ENCODE measurements at regions of chr1 and their contacts with region 1.

Region 1: GRCh38 chr1:224149713-224150112 is 33.3 kb upstream of the DEGS1 start:
- DNase-seq: no peak
- ATAC-seq: no peak
- H3K4me3 ChIP-seq: no peak overlapping the region
- H3K27ac ChIP-seq: no peak overlapping the region
- H3K4me1 ChIP-seq: no peaks in the 10 kb centered on the region
- H3K27me3 ChIP-seq: no peaks in the 10 kb centered on the region
- CTCF ChIP-seq: no peak

Region 2: DNA sequence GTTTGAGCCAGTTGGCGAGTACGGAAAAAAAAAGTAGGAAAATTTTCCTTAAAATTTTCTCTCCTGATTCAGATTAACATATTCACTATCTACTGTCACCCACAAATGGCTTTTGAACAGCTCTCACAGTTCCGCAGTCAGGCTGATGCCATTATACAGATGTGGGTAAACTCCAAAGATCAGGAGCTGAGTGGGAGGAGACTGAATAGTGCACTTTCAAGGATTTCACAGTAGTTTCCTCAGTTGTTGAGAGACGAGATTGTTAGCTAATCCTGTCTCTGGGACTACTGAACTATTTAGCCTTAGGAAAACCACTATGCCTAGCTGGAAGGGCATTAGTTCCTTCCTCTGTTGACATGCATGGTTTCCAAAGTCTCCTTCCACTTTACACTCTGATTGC is 1338.0 kb before region 1 on chr1:
- CTCF ChIA-PET with region 1: interaction called, 16 read pairs
- POLR2A ChIA-PET with region 1: no interaction called
- in situ Hi-C with region 1: no loop called
- intact Hi-C with region 1: no loop called
- DNase-seq: no peak
- ATAC-seq: no peak
- H3K4me3 ChIP-seq: no peak overlapping the region
- H3K27ac ChIP-seq: no peak overlapping the region
- H3K4me1 ChIP-seq: peaks cover 17% of the 10 kb centered on the region
- H3K27me3 ChIP-seq: no peaks in the 10 kb centered on the region
- CTCF ChIP-seq: no peak

Region 3: DNA sequence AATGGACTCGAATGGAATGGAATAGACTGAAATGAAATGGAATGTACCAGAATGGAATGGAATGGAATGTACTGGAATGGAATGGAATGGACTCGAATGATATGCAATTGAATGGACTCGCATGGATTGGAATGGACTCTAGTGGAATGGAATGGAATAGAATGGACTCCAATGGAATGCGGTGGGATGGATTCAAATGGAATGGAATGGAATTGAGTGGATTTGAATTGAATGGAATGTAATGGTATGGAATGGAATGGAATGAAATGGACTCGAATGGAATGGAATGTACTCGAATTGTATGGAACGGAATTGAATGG is 135.4 kb before region 1 on chr1:
- CTCF ChIA-PET with region 1: no interaction called
- POLR2A ChIA-PET with region 1: no interaction called
- in situ Hi-C with region 1: no loop called
- intact Hi-C with region 1: no loop called
- DNase-seq: no peak
- ATAC-seq: no peak
- H3K4me3 ChIP-seq: no peak overlapping the region
- H3K27ac ChIP-seq: no peak overlapping the region
- H3K4me1 ChIP-seq: no peaks in the 10 kb centered on the region
- H3K27me3 ChIP-seq: no peaks in the 10 kb centered on the region
- CTCF ChIP-seq: no peak

Region 4: GRCh38 chr1:224067621-224068457 is 81.9 kb before region 1 on chr1:
- CTCF ChIA-PET with region 1: no interaction called
- POLR2A ChIA-PET with region 1: no interaction called
- in situ Hi-C with region 1: no loop called
- intact Hi-C with region 1: no loop called
- DNase-seq: peak; percentile 79
- ATAC-seq: no peak
- H3K4me3 ChIP-seq: no peak overlapping the region
- H3K27ac ChIP-seq: no peak overlapping the region
- H3K4me1 ChIP-seq: no peaks in the 10 kb centered on the region; the same call in 1 of the 2 replicates
- H3K27me3 ChIP-seq: no peaks in the 10 kb centered on the region
- CTCF ChIP-seq: no peak

Region 5: GRCh38 chr1:224253721-224254120 is 104.0 kb after region 1 on chr1:
- CTCF ChIA-PET with region 1: no interaction called
- POLR2A ChIA-PET with region 1: no interaction called
- in situ Hi-C with region 1: no loop called
- intact Hi-C with region 1: no loop called
- DNase-seq: no peak
- ATAC-seq: no peak
- H3K4me3 ChIP-seq: no peak overlapping the region
- H3K27ac ChIP-seq: no peak overlapping the region
- H3K4me1 ChIP-seq: no peaks in the 10 kb centered on the region
- H3K27me3 ChIP-seq: no peaks in the 10 kb centered on the region
- CTCF ChIP-seq: no peak

Region 6: GRCh38 chr1:224287714-224288113 is 138.0 kb after region 1 on chr1:
- CTCF ChIA-PET with region 1: interaction called, 13 read pairs
- POLR2A ChIA-PET with region 1: no interaction called
- in situ Hi-C with region 1: no loop called
- intact Hi-C with region 1: no loop called
- DNase-seq: no peak
- ATAC-seq: no peak
- H3K4me3 ChIP-seq: no peak overlapping the region
- H3K27ac ChIP-seq: no peak overlapping the region
- H3K4me1 ChIP-seq: no peaks in the 10 kb centered on the region
- H3K27me3 ChIP-seq: no peaks in the 10 kb centered on the region
- CTCF ChIP-seq: no peak

Region 7: DNA sequence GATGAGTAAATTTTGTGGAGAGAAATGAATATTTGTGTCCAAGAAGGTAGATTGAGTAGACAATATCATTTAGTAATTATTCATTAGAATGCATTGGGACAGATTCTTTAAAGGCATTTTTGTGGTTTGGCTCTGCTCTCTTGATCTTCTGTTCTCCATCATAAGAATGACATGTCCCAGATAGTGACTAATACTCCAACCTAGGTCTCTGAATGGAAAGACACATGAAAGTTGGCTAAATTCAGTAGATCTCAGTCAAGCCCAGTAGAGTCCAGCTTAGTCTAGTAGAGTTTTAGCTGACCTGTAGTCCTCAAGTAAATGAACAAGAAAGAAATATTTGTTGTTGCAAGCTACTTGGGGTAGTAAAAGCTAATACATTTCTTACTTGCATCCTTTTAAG is 718.0 kb after region 1 on chr1:
- CTCF ChIA-PET with region 1: interaction called, 12 read pairs
- POLR2A ChIA-PET with region 1: no interaction called
- in situ Hi-C with region 1: no loop called
- intact Hi-C with region 1: no loop called
- DNase-seq: no peak
- ATAC-seq: no peak
- H3K4me3 ChIP-seq: no peak overlapping the region
- H3K27ac ChIP-seq: no peak overlapping the region
- H3K4me1 ChIP-seq: no peaks in the 10 kb centered on the region
- H3K27me3 ChIP-seq: no peaks in the 10 kb centered on the region
- CTCF ChIP-seq: no peak

Measured in Panc1 (cell line).